Panc1 (cell line): ENCODE measurements at regions of chr22 and their contacts with region 1.

Region 1: GRCh38 chr22:31734512-31734911 is 15.4 kb downstream of the PRR14L start:
- DNase-seq: no peak
- ATAC-seq: no peak
- H3K4me3 ChIP-seq: no peak overlapping the region
- H3K27ac ChIP-seq: no peak overlapping the region
- H3K4me1 ChIP-seq: no peaks in the 10 kb centered on the region
- H3K27me3 ChIP-seq: no peaks in the 10 kb centered on the region
- CTCF ChIP-seq: no peak

Region 2: GRCh38 chr22:31707519-31707918 is 27.0 kb before region 1 on chr22:
- CTCF ChIA-PET with region 1: no interaction called
- POLR2A ChIA-PET with region 1: interaction called, 11 read pairs
- in situ Hi-C with region 1: no loop called
- intact Hi-C with region 1: no loop called
- DNase-seq: no peak
- ATAC-seq: no peak
- H3K4me3 ChIP-seq: no peak overlapping the region
- H3K27ac ChIP-seq: no peak overlapping the region
- H3K4me1 ChIP-seq: no peaks in the 10 kb centered on the region
- H3K27me3 ChIP-seq: no peaks in the 10 kb centered on the region
- CTCF ChIP-seq: no peak

Region 3: GRCh38 chr22:31812977-31813605 is 78.6 kb after region 1 on chr22:
- CTCF ChIA-PET with region 1: interaction called, 10 read pairs
- POLR2A ChIA-PET with region 1: no interaction called
- in situ Hi-C with region 1: no loop called
- intact Hi-C with region 1: no loop called
- DNase-seq: no peak
- ATAC-seq: no peak
- H3K4me3 ChIP-seq: no peak overlapping the region
- H3K27ac ChIP-seq: no peak overlapping the region
- H3K4me1 ChIP-seq: no peaks in the 10 kb centered on the region
- H3K27me3 ChIP-seq: no peaks in the 10 kb centered on the region
- CTCF ChIP-seq: no peak